ENCODE measurements at regions of chr5 and their contacts with region 1.

Region 1: DNA sequence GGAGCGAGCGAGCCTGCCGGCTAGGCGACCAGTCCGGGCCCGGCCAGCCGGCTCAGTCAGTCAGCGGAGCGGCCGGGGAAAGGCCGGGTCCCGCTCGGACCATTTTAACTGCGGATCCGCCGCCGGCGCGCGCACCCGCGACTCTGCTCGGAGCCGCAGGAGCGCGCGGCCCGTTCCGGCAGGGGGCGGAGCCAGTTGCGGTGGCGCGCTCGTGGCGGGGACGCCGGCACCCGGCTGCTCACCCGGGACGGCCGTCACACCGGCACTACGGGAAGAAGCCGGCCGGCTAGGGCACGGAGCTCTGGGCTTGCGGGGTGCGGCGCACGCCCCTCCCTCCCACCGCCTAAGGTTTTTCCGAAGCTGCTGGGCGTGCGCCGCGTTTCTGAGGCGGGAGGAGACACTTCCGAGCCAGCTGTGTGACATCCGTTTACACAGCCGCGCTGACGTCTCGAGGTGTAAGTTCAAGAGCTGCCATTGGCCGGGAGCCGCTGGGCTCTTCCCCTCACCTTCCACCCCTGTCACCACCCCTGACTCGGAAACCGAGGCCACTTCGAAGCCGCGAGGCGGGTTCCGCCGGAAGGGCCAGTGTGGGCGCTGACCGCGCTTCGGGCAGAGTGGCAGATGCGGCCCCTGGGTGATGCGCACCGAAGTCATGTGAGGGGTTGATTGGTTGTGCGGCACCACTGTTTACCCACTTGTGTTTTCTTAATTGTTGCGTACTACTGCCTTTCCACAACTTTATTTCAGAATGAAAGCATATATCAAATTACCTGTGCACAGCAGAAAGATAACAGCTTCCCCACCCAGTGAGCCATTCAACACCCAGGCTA is at the start of gene FBXL17:
- DNase-seq: peak; percentile 90 to 97
- ATAC-seq: peak; percentile 76 to 91 (median 79)
- H3K4me3 ChIP-seq: peak within 1 kb of the TSS; percentile 62
- H3K4me3 Mint-ChIP-seq: peak within 1 kb of the TSS; percentile 89
- H3K27ac ChIP-seq: peak within 1 kb of the TSS; percentile 95
- H3K27ac Mint-ChIP-seq: peak within 1 kb of the TSS; percentile 93 to 94
- H3K4me1 ChIP-seq: peaks cover 8% of the 10 kb centered on the region
- H3K4me1 Mint-ChIP-seq: peaks cover 39 to 41% of the 10 kb centered on the region in 2 donors
- H3K27me3 ChIP-seq: no peaks in the 10 kb centered on the region
- H3K27me3 Mint-ChIP-seq: peaks cover 0 to 2% of the 10 kb centered on the region in 2 donors
- CTCF ChIP-seq: no peak
- total RNA-seq, gene FBXL17: 34.2 to 46.8 (median 34.9) TPM

Region 2: DNA sequence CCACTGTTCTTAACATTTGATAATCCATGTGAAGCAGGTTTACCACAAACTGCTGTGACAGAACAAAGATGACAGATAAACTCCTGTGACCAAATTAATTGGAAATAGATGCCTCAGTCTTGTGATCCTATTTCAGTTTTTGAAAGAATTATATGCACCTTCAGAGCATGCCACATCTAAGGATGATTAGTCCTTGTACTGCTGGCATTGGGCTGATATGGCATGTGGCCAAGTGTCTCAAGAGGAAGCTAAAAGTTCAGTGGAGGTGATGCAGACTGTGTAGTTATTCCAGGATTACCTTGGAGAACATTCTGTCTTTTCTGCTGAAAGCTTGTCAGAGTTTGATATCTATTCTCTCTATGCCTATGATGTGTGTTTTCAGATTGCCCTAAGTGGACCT is 397.0 kb before region 1 on chr5:
- intact Hi-C with region 1: loop called (anchors 10 kb)
- DNase-seq: no peak
- ATAC-seq: no peak
- H3K4me3 ChIP-seq: no peak overlapping the region
- H3K4me3 Mint-ChIP-seq: no peak overlapping the region
- H3K27ac ChIP-seq: no peak overlapping the region
- H3K27ac Mint-ChIP-seq: peak overlapping the region; percentile 8 to 48
- H3K4me1 ChIP-seq: peaks cover 27% of the 10 kb centered on the region
- H3K4me1 Mint-ChIP-seq: peaks cover 56% of the 10 kb centered on the region in 2 donors
- H3K27me3 ChIP-seq: no peaks in the 10 kb centered on the region
- H3K27me3 Mint-ChIP-seq: no peaks in the 10 kb centered on the region
- CTCF ChIP-seq: no peak

Region 3: GRCh38 chr5:108681079-108681921 is 299.1 kb after region 1 on chr5:
- intact Hi-C with region 1: no loop called
- DNase-seq: peak in 1 of 2 donors; percentile 71
- ATAC-seq: peak; percentile 79 to 89 (median 88)
- H3K4me3 ChIP-seq: no peak overlapping the region
- H3K4me3 Mint-ChIP-seq: no peak overlapping the region
- H3K27ac ChIP-seq: no peak overlapping the region
- H3K27ac Mint-ChIP-seq: no peak overlapping the region
- H3K4me1 ChIP-seq: no peaks in the 10 kb centered on the region
- H3K4me1 Mint-ChIP-seq: no peaks in the 10 kb centered on the region
- H3K27me3 ChIP-seq: no peaks in the 10 kb centered on the region
- H3K27me3 Mint-ChIP-seq: no peaks in the 10 kb centered on the region
- CTCF ChIP-seq: peak; percentile 71

Measured in natural killer cell (primary cell).